Naive thymus-derived CD8-positive, alpha-beta T cell (primary cell): ENCODE measurements at regions of chr19 and their contacts with region 1.

Region 1: GRCh38 chr19:6372594-6373095 is at the start of gene ALKBH7:
- DNase-seq: peak; percentile 87 to 99 (median 98)
- ATAC-seq: peak; percentile 82 to 85
- H3K4me3 Mint-ChIP-seq: peak within 1 kb of the TSS; percentile 86 to 97 (median 93)
- H3K27ac Mint-ChIP-seq: peak within 1 kb of the TSS; percentile 73 to 98 (median 95)
- H3K4me1 Mint-ChIP-seq: peaks cover 12 to 26% (median 22%) of the 10 kb centered on the region in 4 donors
- H3K27me3 Mint-ChIP-seq: no peaks in the 10 kb centered on the region
- polyA plus RNA-seq, gene ALKBH7: 130 to 162 (median 144) TPM

Region 2: GRCh38 chr19:5857203-5858081 is 515.2 kb before region 1 on chr19:
- POLR2A ChIA-PET with region 1: no interaction called
- DNase-seq: no peak
- ATAC-seq: no peak
- H3K4me3 Mint-ChIP-seq: no peak overlapping the region
- H3K27ac Mint-ChIP-seq: no peak overlapping the region
- H3K4me1 Mint-ChIP-seq: peaks cover 0 to 5% (median 0%) of the 10 kb centered on the region in 4 donors
- H3K27me3 Mint-ChIP-seq: peaks cover 0 to 3% (median 0%) of the 10 kb centered on the region in 5 donors

Region 3: DNA sequence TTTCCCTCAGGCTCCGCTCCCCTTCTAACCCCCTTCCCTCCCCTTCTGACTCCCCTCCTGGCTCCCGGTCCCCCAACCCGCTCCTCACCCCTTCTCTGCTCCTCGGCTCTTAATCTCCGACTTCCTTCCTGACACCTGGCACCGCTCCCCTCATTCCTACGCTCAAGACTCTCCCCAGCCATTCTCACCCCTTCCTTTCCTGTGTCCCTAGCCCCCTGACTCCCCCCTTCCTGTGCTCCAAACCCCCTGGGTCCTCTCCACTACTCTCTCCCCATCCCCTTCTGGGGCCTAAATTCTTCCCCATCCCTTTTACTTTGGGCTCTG is 10.7 kb before region 1 on chr19:
- POLR2A ChIA-PET with region 1: interaction called, 83 read pairs
- DNase-seq: no peak
- ATAC-seq: peak in 1 of 2 donors; percentile 11
- H3K4me3 Mint-ChIP-seq: peak overlapping the region; percentile 91 to 100 (median 97)
- H3K27ac Mint-ChIP-seq: peak overlapping the region; percentile 86 to 98 (median 97)
- H3K4me1 Mint-ChIP-seq: peaks cover 16 to 40% (median 22%) of the 10 kb centered on the region in 4 donors
- H3K27me3 Mint-ChIP-seq: no peaks in the 10 kb centered on the region

Region 4: GRCh38 chr19:6383188-6383587 is 10.5 kb after region 1 on chr19:
- POLR2A ChIA-PET with region 1: no interaction called
- DNase-seq: no peak
- ATAC-seq: no peak
- H3K4me3 Mint-ChIP-seq: no peak overlapping the region
- H3K27ac Mint-ChIP-seq: peak overlapping the region in 3 of 10 donors; percentile 11 to 75 (median 40)
- H3K4me1 Mint-ChIP-seq: peaks cover 0 to 4% (median 1%) of the 10 kb centered on the region in 4 donors
- H3K27me3 Mint-ChIP-seq: no peaks in the 10 kb centered on the region

Region 5: DNA sequence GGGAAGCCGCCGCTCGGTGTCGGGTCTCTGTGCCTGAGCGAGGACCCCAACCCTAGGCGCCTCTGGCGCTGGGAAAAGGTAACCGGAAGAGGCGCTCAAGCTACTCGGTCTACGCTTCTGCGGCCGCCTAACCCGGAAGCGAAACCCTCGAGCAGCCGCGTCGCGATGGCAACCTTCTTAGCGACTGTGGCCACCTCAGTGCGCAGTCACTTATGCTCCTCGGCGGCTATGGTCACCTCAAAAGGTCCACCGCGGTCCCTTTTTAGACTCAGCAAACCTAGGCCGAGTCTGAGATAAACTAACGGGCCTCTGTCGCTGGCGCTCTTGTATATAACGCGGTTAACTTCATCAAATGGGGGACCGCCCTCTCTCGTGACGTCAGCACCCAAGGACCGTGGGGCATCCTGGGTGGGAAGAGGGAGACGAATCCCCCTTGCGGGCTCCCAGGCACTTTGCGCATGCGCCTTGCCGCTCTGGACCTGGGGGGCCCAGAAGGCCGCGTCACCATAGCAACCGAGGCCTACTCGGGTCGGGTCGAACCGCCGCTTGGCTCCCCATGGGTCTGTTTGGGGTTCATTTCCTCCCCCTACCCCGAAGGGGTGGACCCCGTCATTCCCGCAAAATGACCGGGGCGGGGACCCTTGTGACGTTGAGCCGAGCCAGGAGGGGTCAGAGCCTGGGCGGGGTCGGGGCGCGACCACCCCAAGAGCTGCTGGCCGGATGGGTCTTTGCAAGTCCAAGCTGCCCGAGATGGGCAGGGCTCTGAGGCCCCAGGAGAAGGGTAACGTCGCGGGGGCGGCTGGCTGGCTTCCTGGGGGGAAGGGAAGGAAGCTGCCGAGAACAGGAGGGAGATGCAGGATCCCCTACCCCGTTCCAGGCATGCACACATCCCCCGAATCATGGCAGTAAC is 20.7 kb after region 1 on chr19 and contains the start of gene GTF2F1:
- POLR2A ChIA-PET with region 1: interaction called, 10 read pairs
- DNase-seq: peak; percentile 89 to 99 (median 97)
- ATAC-seq: peak; percentile 79 to 82
- H3K4me3 Mint-ChIP-seq: peak within 1 kb of the TSS; percentile 85 to 96 (median 94)
- H3K27ac Mint-ChIP-seq: peak within 1 kb of the TSS; percentile 89 to 99 (median 99)
- H3K4me1 Mint-ChIP-seq: peaks cover 19 to 36% (median 28%) of the 10 kb centered on the region in 4 donors
- H3K27me3 Mint-ChIP-seq: no peaks in the 10 kb centered on the region
- polyA plus RNA-seq, gene GTF2F1: 16.3 to 30.1 (median 20.6) TPM